Activated CD8-positive, alpha-beta T cell treated with anti-CD3 and anti-CD28 coated beads, Interleukin-2, amount 10 ng/mL, durations not matched to agents 7 days and 5 days (primary cell): ENCODE measurements at regions of chr7 and their contacts with region 1.

Region 1: GRCh38 chr7:64902806-64903721 is at the start of gene ZNF273:
- DNase-seq: peak; percentile 96
- ATAC-seq: peak; percentile 100
- H3K4me3 Mint-ChIP-seq: peak within 1 kb of the TSS; percentile 97
- H3K27ac Mint-ChIP-seq: peak within 1 kb of the TSS; percentile 95
- H3K4me1 Mint-ChIP-seq: peaks cover 44% of the 10 kb centered on the region
- H3K27me3 Mint-ChIP-seq: no peaks in the 10 kb centered on the region
- total RNA-seq, gene ZNF273: 10.6 to 11.8 TPM

Region 2: DNA sequence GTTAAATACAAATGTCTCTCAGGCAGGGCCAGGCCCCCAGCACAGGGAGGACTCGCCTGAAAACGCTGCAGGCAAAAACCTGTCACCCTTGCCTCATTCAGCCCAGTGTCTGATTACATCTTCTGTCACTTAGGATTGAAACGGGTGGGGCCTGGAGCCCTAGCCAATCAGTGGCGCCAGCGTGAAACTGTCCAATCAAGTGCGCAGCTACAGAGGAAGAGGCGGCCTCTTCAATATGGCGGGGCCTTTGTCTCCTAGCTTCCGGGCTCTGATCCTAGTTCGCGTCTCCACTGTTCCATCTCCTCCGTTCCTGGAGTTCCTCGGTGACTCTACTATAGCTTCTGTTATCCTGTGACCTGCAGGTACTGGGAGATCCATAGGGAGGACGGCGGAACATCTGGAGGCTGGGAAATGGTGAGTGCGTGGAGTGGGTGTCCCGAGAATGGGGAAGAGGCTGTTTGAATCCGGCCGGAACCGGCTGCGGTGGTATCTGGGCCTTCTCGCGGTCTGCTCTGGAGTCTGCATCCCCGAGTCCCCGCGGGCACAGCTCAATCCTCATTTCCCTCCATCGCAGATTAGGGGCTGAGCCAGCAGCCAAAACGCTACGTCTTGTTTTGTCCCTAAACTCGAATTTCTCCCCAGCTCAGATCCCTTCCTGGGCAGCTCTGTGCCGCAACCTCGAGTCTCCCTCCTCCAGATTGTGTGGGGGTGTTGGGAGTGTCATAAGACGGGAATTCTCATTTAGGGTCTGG is 589.1 kb before region 1 on chr7 and contains the start of gene ZNF736:
- CTCF ChIA-PET with region 1: no interaction called
- POLR2A ChIA-PET with region 1: interaction called, 10 read pairs
- DNase-seq: peak; percentile 93
- ATAC-seq: peak; percentile 100
- H3K4me3 Mint-ChIP-seq: peak within 1 kb of the TSS; percentile 98
- H3K27ac Mint-ChIP-seq: peak within 1 kb of the TSS; percentile 99
- H3K4me1 Mint-ChIP-seq: peaks cover 33% of the 10 kb centered on the region
- H3K27me3 Mint-ChIP-seq: no peaks in the 10 kb centered on the region
- total RNA-seq, gene ZNF736: 26.0 to 27.4 TPM

Region 3: DNA sequence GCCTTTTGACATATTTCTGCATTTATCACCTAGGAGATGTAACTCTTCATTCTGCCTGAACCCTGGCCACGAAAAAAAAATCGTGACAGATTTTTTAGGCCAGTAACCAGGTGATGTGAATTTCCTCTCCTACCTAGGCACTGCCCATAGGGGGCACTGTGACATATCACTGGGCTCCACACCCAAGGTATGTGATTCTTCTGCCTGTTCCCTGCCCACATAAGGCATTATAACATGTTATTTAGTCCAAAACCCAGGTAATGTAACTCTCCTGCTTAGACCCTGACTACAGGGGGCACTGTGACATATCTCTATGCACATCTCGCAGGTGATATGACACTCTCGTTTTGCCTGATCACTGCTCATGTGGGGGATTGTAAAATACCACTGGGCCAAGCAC is 266.7 kb before region 1 on chr7:
- CTCF ChIA-PET with region 1: no interaction called
- POLR2A ChIA-PET with region 1: no interaction called
- DNase-seq: no peak
- ATAC-seq: no peak
- H3K4me3 Mint-ChIP-seq: no peak overlapping the region
- H3K27ac Mint-ChIP-seq: no peak overlapping the region
- H3K4me1 Mint-ChIP-seq: no peaks in the 10 kb centered on the region
- H3K27me3 Mint-ChIP-seq: no peaks in the 10 kb centered on the region

Region 4: GRCh38 chr7:64774204-64774842 is 128.7 kb before region 1 on chr7:
- CTCF ChIA-PET with region 1: no interaction called
- POLR2A ChIA-PET with region 1: no interaction called
- DNase-seq: no peak
- ATAC-seq: no peak
- H3K4me3 Mint-ChIP-seq: no peak overlapping the region
- H3K27ac Mint-ChIP-seq: no peak overlapping the region
- H3K4me1 Mint-ChIP-seq: no peaks in the 10 kb centered on the region
- H3K27me3 Mint-ChIP-seq: no peaks in the 10 kb centered on the region

Region 5: GRCh38 chr7:64794171-64794844 is 108.8 kb before region 1 on chr7 and contains the start of gene ZNF138:
- CTCF ChIA-PET with region 1: no interaction called
- POLR2A ChIA-PET with region 1: interaction called, 22 read pairs
- DNase-seq: peak; percentile 97
- ATAC-seq: peak; percentile 100
- H3K4me3 Mint-ChIP-seq: peak within 1 kb of the TSS; percentile 98
- H3K27ac Mint-ChIP-seq: peak within 1 kb of the TSS; percentile 100
- H3K4me1 Mint-ChIP-seq: peaks cover 20% of the 10 kb centered on the region
- H3K27me3 Mint-ChIP-seq: no peaks in the 10 kb centered on the region
- total RNA-seq, gene ZNF138: 10.9 to 11.7 TPM

Region 6: DNA sequence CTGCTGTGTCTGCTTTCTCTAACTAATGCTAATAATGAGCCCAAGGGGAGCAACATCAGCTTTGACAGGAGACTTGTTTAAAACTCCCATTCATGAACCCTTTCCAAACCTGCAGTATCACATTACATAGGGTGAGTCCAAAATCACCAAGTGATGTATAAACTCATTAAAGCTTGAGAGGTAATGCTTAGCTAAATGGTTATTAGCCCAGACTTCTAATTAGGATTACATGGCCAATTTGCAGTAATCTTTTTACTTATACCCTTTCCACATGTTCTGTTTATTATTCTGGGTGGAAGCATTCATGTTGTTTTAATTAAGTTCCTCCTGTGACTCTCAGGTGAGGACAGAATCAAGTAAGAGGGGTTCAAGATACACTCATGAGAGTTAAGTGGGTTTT is 91.3 kb before region 1 on chr7:
- CTCF ChIA-PET with region 1: no interaction called
- POLR2A ChIA-PET with region 1: no interaction called
- DNase-seq: no peak
- ATAC-seq: no peak
- H3K4me3 Mint-ChIP-seq: no peak overlapping the region
- H3K27ac Mint-ChIP-seq: no peak overlapping the region
- H3K4me1 Mint-ChIP-seq: no peaks in the 10 kb centered on the region
- H3K27me3 Mint-ChIP-seq: no peaks in the 10 kb centered on the region

Region 7: GRCh38 chr7:64887756-64888508 is 15.1 kb before region 1 on chr7:
- CTCF ChIA-PET with region 1: interaction called, 11 read pairs
- POLR2A ChIA-PET with region 1: interaction called, 3 read pairs
- DNase-seq: peak; percentile 54
- ATAC-seq: peak; percentile 56
- H3K4me3 Mint-ChIP-seq: peak overlapping the region; percentile 75
- H3K27ac Mint-ChIP-seq: no peak overlapping the region
- H3K4me1 Mint-ChIP-seq: peaks cover 13% of the 10 kb centered on the region
- H3K27me3 Mint-ChIP-seq: peaks cover 49% of the 10 kb centered on the region

Region 8: DNA sequence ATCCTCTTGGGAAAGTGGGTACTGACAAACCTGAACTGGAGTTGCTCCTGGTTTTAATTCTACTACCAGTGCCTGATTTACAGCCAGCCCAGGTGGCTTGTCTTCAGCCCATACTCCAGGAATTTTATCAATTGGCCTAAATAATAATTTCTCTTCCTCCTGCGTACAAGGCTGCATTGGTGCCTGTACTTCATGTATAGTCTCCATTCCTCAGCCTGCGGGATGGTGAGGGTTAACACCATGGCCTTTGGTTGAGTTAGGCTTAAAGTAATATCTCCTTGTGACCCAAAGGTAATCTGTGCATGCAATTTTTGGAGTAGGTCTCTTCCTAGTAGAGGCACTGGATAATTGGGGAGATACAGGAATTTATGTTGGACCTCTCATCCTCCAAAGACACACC is 93.2 kb after region 1 on chr7:
- CTCF ChIA-PET with region 1: no interaction called
- POLR2A ChIA-PET with region 1: no interaction called
- DNase-seq: no peak
- ATAC-seq: no peak
- H3K4me3 Mint-ChIP-seq: no peak overlapping the region
- H3K27ac Mint-ChIP-seq: no peak overlapping the region
- H3K4me1 Mint-ChIP-seq: peaks cover 1% of the 10 kb centered on the region
- H3K27me3 Mint-ChIP-seq: no peaks in the 10 kb centered on the region

Region 9: GRCh38 chr7:65006094-65006992 is 103.3 kb after region 1 on chr7 and contains the start of gene ERV3-1:
- CTCF ChIA-PET with region 1: no interaction called
- POLR2A ChIA-PET with region 1: interaction called, 21 read pairs
- DNase-seq: peak; percentile 97
- ATAC-seq: peak; percentile 100
- H3K4me3 Mint-ChIP-seq: peak within 1 kb of the TSS; percentile 93
- H3K27ac Mint-ChIP-seq: peak within 1 kb of the TSS; percentile 93
- H3K4me1 Mint-ChIP-seq: peaks cover 27% of the 10 kb centered on the region
- H3K27me3 Mint-ChIP-seq: no peaks in the 10 kb centered on the region
- total RNA-seq, gene ERV3-1: 12.5 to 14.8 TPM